OCI-LY7 (cell line): ENCODE measurements at regions of chr10 and their contacts with region 1.

Region 1: GRCh38 chr10:63197344-63198106 is 64.4 kb downstream of the NRBF2 start:
- DNase-seq: no peak
- H3K4me3 ChIP-seq: no peak overlapping the region
- H3K27ac ChIP-seq: no peak overlapping the region
- H3K4me1 ChIP-seq: no peaks in the 10 kb centered on the region
- CTCF ChIP-seq: no peak

Region 2: GRCh38 chr10:63210611-63211196 is 13.2 kb after region 1 on chr10:
- CTCF ChIA-PET with region 1: no interaction called
- POLR2A ChIA-PET with region 1: interaction called, 13 read pairs
- intact Hi-C with region 1: no loop called
- DNase-seq: no peak
- H3K4me3 ChIP-seq: no peak overlapping the region
- H3K27ac ChIP-seq: no peak overlapping the region
- H3K4me1 ChIP-seq: peaks cover 2% of the 10 kb centered on the region
- CTCF ChIP-seq: no peak

Region 3: DNA sequence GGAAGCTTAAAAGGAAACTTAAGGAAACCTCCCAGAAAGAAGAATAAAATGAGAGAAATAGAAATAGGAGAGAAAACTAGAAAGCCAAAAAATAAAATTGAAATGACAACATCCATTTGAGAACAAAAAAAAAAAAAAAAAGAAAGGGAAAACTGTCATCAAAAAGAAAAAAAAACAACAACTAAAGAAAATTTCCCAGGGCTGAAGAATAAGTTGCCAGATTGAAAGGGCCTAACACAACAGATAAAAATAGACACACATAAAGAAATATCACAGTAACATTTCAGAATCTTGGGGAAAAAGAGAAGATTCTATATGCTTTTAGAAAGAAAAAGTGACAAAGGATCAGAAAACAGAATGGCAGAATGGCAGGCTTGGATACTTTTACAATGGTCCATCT is 111.1 kb after region 1 on chr10:
- CTCF ChIA-PET with region 1: no interaction called
- POLR2A ChIA-PET with region 1: no interaction called
- intact Hi-C with region 1: no loop called
- DNase-seq: no peak
- H3K4me3 ChIP-seq: no peak overlapping the region
- H3K27ac ChIP-seq: no peak overlapping the region
- H3K4me1 ChIP-seq: no peaks in the 10 kb centered on the region
- CTCF ChIP-seq: no peak

Region 4: DNA sequence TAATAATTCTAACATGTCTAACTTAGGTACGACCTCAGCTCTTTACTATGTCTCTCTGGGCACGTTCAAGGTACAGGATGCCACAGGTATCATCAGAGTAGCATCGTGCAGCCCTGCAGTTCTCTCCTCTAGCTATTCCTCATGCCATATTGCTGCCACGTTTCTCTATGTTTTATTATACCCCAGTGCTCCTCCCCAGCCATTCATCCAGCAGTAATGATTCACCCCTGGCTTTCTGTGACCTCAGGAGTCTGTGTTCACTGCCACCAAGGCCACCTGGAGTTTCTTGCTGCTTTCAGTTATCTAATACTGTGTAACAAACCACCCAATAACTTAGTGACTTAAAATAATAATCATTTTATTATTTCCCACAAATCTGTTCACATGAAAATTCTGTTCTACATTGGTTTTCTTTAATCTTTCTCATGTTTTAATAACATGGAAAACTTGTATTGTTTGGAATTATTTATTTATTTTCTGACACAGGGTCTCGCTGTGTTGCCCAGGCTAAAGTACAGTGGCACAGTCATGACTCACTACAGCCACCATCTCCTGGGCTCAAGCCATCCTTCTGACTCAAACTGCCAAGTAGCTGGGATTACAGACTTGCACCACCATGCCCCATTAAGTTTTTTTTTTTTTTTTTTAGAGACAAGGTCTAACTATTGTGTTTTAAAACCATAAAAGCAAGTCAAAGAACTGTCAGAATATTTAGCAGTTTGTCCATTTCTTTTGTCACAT is 345.5 kb after region 1 on chr10:
- CTCF ChIA-PET with region 1: no interaction called
- POLR2A ChIA-PET with region 1: no interaction called
- intact Hi-C with region 1: no loop called
- DNase-seq: no peak
- H3K4me3 ChIP-seq: no peak overlapping the region
- H3K27ac ChIP-seq: no peak overlapping the region
- H3K4me1 ChIP-seq: no peaks in the 10 kb centered on the region
- CTCF ChIP-seq: no peak